Activated CD4-positive, alpha-beta memory T cell treated with anti-CD3 and anti-CD28 coated beads for 36 hours (primary cell): ENCODE measurements at regions of chr13 and their contacts with region 1.

Region 1: GRCh38 chr13:51452361-51453206 is at the start of gene INTS6:
- DNase-seq: peak; percentile 99
- H3K4me3 Mint-ChIP-seq: peak within 1 kb of the TSS; percentile 92
- H3K27ac Mint-ChIP-seq: peak within 1 kb of the TSS; percentile 98
- H3K4me1 Mint-ChIP-seq: peaks cover 35% of the 10 kb centered on the region
- H3K27me3 Mint-ChIP-seq: peaks cover 1% of the 10 kb centered on the region
- total RNA-seq, gene INTS6: 44.4 to 47.1 TPM

Region 2: DNA sequence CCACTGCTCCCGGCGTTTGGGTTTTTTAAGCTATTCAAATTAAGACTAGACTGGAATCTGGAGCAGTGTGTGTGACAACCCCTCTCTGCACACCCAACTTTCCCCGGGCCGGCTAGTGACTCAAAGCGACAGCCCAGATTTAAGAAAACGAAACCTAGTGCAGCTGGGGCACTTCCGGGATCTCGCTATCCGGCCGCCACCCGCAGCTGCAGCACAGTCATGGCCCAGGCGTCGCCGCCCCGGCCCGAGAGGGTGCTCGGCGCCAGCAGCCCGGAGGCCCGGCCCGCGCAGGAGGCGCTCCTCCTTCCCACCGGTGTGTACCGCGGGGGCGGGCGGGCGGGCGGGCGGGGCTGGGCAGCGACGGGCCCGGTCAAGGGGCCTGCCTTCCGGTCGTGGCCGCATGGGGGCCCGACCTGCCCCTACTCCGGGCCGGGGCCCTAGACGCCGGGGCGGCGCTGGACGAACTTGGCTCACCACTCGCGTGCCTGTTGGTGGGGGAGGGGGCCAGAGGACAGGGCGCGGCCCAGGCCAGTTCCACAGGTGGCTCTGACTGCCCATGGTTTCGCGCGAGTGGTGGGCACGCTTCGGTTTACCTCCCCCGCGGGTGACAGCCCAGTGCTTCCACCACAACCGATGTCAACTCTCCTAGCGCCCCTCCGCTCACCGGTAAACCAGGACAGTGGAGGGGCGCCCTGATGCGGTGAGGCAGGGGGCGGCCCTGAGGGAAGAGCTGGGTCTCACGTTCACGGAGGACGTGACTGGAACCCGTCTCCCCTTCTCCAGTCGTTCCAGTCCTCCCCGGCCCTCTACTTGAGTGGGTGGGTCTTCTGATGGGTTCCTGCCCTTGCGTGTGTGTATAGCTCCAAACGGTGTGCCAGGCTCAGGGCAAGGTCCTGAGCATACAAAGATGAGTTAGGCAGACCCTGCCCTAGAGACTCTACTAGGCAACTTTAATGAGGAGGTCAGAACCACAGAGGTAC is 1956.5 kb before region 1 on chr13 and contains the start of gene PHF11:
- CTCF ChIA-PET with region 1: no interaction called
- POLR2A ChIA-PET with region 1: no interaction called
- intact Hi-C with region 1: loop called (anchors 5 kb)
- DNase-seq: peak; percentile 95
- H3K4me3 Mint-ChIP-seq: peak within 1 kb of the TSS; percentile 91
- H3K27ac Mint-ChIP-seq: peak within 1 kb of the TSS; percentile 98
- H3K4me1 Mint-ChIP-seq: peaks cover 52% of the 10 kb centered on the region
- H3K27me3 Mint-ChIP-seq: no peaks in the 10 kb centered on the region
- total RNA-seq, gene PHF11: 89.2 to 99.4 TPM

Region 3: DNA sequence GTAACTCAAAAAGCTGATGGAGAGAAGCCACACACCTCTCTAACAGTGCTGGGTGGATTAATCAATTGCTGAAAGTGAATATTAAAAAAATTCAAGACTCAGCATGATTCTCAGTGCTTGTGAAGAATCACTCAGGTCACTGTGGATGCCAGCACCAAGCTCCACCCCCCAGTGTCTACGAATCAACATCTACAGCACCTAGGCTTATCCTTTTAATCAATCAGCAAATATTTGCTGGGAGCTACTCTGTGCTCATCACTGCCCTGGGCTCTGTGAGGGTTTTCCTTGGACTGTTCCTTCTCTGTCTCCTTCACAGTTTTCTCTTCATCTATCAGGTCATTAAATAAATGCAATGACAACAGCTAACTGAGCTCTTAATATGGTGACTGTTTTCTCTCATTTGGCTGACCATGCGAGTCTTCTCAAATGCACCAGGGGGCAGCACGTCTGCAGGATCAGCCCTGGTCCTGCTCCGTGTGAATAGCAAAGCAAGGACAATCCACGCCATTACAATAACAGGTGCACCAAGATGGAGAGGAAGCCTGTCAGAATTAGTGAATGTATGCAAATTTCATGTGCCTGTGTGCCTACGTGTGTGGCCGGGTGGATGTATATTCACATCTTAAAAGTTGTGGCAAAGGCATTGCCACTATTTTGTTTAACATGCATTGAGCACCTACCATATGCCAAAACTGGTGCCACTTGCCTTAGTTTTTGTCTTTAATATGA is 326.9 kb before region 1 on chr13:
- CTCF ChIA-PET with region 1: no interaction called
- POLR2A ChIA-PET with region 1: no interaction called
- intact Hi-C with region 1: loop called (anchors 5 kb)
- DNase-seq: peak; percentile 60
- H3K4me3 Mint-ChIP-seq: no peak overlapping the region
- H3K27ac Mint-ChIP-seq: no peak overlapping the region
- H3K4me1 Mint-ChIP-seq: peaks cover 16% of the 10 kb centered on the region
- H3K27me3 Mint-ChIP-seq: peaks cover 15% of the 10 kb centered on the region

Region 4: GRCh38 chr13:51348069-51348967 is 104.3 kb before region 1 on chr13:
- CTCF ChIA-PET with region 1: no interaction called
- POLR2A ChIA-PET with region 1: no interaction called
- intact Hi-C with region 1: no loop called
- DNase-seq: no peak
- H3K4me3 Mint-ChIP-seq: no peak overlapping the region
- H3K27ac Mint-ChIP-seq: no peak overlapping the region
- H3K4me1 Mint-ChIP-seq: no peaks in the 10 kb centered on the region
- H3K27me3 Mint-ChIP-seq: no peaks in the 10 kb centered on the region

Region 5: GRCh38 chr13:51534041-51534817 is 81.6 kb after region 1 on chr13:
- CTCF ChIA-PET with region 1: no interaction called
- POLR2A ChIA-PET with region 1: no interaction called
- intact Hi-C with region 1: loop called (anchors 5 kb)
- DNase-seq: peak; percentile 52
- H3K4me3 Mint-ChIP-seq: no peak overlapping the region
- H3K27ac Mint-ChIP-seq: no peak overlapping the region
- H3K4me1 Mint-ChIP-seq: peaks cover 33% of the 10 kb centered on the region
- H3K27me3 Mint-ChIP-seq: no peaks in the 10 kb centered on the region

Region 6: GRCh38 chr13:51645154-51645650 is 192.6 kb after region 1 on chr13:
- CTCF ChIA-PET with region 1: interaction called, 3 read pairs
- POLR2A ChIA-PET with region 1: interaction called, 20 read pairs
- intact Hi-C with region 1: loop called (anchors 1 kb)
- DNase-seq: peak; percentile 32
- H3K4me3 Mint-ChIP-seq: peak overlapping the region; percentile 38
- H3K27ac Mint-ChIP-seq: peak overlapping the region; percentile 68
- H3K4me1 Mint-ChIP-seq: peaks cover 46% of the 10 kb centered on the region
- H3K27me3 Mint-ChIP-seq: no peaks in the 10 kb centered on the region

Region 7: DNA sequence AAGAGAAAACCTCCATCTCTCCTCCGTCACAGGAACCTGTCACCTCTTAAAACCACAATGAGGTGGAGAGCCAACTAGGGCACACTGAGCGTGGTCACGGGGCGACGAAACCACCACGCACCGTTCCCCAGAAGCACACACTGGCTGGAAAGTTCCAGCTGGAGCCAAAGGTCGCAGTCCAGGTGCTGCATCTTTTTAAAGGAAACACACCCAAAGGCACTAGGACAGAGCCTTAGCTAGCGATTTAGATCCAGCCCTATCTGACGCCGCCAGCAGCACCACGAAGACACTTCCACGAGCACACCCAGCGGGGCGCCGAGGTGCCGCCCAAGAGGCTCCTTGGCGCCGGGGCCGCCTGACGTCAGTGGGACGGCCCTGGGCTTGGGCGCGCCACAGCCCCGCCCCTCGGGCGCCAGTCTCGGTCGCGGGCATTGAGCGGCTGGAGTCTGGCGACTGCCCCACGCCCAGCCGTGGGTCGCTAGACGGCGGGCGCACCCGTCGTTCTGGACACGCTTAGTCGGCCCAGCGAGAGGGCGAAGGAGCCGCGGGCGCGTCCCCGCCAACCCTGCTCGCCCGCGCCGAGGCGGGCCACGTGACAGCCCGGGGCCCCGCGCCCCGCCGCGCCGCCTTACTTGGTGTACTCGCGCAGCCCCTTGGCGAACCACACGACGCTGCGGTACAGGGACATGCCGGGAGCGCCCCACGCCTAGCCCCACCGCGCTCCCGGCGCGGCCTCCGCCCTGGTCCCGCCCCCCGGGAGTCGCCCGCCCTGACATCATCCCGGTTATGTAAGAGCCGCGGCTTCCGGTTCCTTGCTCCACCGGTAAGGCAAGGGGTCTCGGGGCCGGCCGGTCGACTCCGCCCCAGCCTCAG is 351.1 kb after region 1 on chr13 and contains the start of gene DHRS12:
- CTCF ChIA-PET with region 1: interaction called, 26 read pairs
- POLR2A ChIA-PET with region 1: interaction called, 17 read pairs
- intact Hi-C with region 1: loop called (anchors 1 kb)
- DNase-seq: peak; percentile 89
- H3K4me3 Mint-ChIP-seq: peak within 1 kb of the TSS; percentile 94
- H3K27ac Mint-ChIP-seq: peak within 1 kb of the TSS; percentile 100
- H3K4me1 Mint-ChIP-seq: peaks cover 58% of the 10 kb centered on the region
- H3K27me3 Mint-ChIP-seq: peaks cover 2% of the 10 kb centered on the region
- total RNA-seq, gene DHRS12: 6.7 to 7.0 TPM

Region 8: DNA sequence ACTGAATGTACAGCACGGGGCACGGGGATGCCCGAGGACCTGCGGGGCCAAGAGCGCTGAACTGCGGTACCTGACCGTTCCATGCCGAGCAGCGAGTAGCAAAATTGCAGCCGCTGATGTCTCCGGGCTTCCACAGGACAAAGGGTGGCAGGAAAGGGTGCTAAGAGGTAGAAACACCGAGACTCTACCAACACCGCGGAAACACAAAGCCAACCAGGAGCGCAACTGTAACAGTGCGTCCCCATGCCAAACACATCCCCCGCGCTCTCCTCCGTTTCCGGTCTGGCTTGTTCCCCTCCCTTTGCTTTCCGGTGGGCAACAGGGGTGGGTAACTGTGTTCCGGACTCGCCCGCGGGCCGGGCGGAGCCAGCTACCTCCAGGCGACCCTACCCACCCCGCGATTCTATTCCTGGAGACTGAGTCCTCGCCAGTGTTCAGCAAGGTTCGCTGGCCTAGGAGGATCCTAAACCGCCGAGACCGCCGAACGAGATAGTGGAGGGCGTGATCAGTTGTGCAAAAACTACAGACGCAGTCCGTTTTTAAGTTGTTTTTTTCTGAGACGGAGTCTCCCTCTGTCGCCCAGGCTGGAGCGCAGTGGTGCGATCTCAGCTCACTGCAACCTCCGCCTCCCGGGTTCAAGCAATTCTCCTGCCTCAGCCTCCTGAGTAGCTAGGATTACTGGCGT is 741.7 kb after region 1 on chr13:
- CTCF ChIA-PET with region 1: no interaction called
- POLR2A ChIA-PET with region 1: interaction called, 5 read pairs
- intact Hi-C with region 1: loop called (anchors 5 kb)
- DNase-seq: peak; percentile 93
- H3K4me3 Mint-ChIP-seq: peak overlapping the region; percentile 97
- H3K27ac Mint-ChIP-seq: peak overlapping the region; percentile 91
- H3K4me1 Mint-ChIP-seq: peaks cover 22% of the 10 kb centered on the region
- H3K27me3 Mint-ChIP-seq: no peaks in the 10 kb centered on the region